HepG2 (cell line): ENCODE measurements at regions of chr3 and their contacts with region 1.

Region 1: GRCh38 chr3:9878700-9879099 is 1.4 kb downstream of the CIDEC start:
- DNase-seq: peak; percentile 84
- ATAC-seq: peak; percentile 98
- H3K4me3 ChIP-seq: peak overlapping the region in 1 of 3 experiments; percentile 51; a peak in 2 of 6 replicates
- H3K27ac ChIP-seq: peak overlapping the region; percentile 49
- H3K4me1 ChIP-seq: peaks cover 34% of the 10 kb centered on the region
- H3K27me3 ChIP-seq: no peaks in the 10 kb centered on the region
- CTCF ChIP-seq: 0 out of 2 replicates have a peak, but pooled peaks have one; percentile 3
- EP300 ChIP-seq: peak in 1 of 2 experiments; percentile 38; a peak in 1 of 4 replicates
- POLR2A ChIP-seq: peak; percentile 62 to 75; a peak in 3 of 4 replicates
- RAD21 ChIP-seq: no peak

Region 2: DNA sequence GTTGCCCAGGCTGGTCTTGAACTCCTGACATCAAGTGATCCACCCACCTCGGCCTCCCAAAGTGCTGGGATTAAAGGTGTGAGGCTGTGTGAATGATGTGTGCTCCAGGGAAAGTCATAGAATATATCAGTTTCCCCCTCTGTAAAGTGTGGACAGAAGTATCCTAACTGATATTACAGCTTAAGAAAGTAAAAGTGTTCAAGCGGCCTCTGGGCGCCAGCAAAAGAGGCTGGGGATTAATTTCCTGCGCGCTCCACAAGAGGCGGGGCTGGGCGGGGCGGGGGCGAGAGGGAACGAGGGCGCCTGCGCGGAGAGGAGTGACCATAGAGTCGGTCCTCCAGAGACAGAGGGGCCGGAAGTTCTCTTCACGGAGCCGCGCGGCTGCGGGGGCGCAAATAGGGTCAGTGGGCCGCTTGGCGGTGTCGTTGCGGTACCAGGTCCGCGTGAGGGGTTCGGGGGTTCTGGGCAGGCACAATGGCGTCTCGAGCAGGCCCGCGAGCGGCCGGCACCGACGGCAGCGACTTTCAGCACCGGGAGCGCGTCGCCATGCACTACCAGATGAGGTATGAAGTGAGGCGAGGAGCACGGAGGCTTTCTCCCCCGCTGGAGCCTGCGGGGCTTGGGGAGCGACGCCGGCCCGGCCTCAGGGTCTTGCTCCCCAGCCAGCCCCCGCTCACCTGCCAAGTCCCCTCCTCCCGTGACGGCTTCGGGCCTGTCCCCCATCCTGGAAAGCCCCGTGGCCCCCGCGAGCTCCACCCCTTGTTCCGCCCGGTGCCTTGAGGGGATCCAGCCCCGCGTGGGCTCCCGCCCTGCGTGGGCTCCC is 11.8 kb after region 1 on chr3 and contains the start of gene JAGN1:
- CTCF ChIA-PET with region 1: no interaction called
- POLR2A ChIA-PET with region 1: interaction called, 14 read pairs
- in situ Hi-C with region 1: no loop called
- intact Hi-C with region 1: loop called (anchors 1 kb)
- DNase-seq: peak; percentile 77
- ATAC-seq: peak; percentile 85
- H3K4me3 ChIP-seq: peak within 1 kb of the TSS; percentile 85 to 99 (median 98)
- H3K27ac ChIP-seq: peak within 1 kb of the TSS; percentile 92
- H3K4me1 ChIP-seq: peaks cover 50% of the 10 kb centered on the region
- H3K27me3 ChIP-seq: no peaks in the 10 kb centered on the region; a peak in 1 of 5 replicates
- CTCF ChIP-seq: peak; percentile 57
- EP300 ChIP-seq: peak in 1 of 2 experiments; percentile 46; a peak in 2 of 4 replicates
- POLR2A ChIP-seq: peak; percentile 89 to 97
- RAD21 ChIP-seq: peak; percentile 71
- total RNA-seq, gene JAGN1: 40.9 and 50.9 TPM in 2 replicates

Region 3: GRCh38 chr3:9915254-9916141 is 36.8 kb after region 1 on chr3:
- CTCF ChIA-PET with region 1: no interaction called
- POLR2A ChIA-PET with region 1: interaction called, 5 read pairs
- in situ Hi-C with region 1: no loop called
- intact Hi-C with region 1: loop called (anchors 5 kb)
- DNase-seq: peak; percentile 36
- ATAC-seq: peak; percentile 52
- H3K4me3 ChIP-seq: peak overlapping the region; percentile 55 to 86 (median 83); a peak in 5 of 6 replicates
- H3K27ac ChIP-seq: peak overlapping the region; percentile 90
- H3K4me1 ChIP-seq: peaks cover 38% of the 10 kb centered on the region
- H3K27me3 ChIP-seq: no peaks in the 10 kb centered on the region
- CTCF ChIP-seq: peak; percentile 53; the same call in 1 of the 2 replicates
- EP300 ChIP-seq: no peak
- POLR2A ChIP-seq: no peak; a peak in 1 of 4 replicates
- RAD21 ChIP-seq: peak; percentile 89

Region 4: GRCh38 chr3:10655105-10655504 is 776.4 kb after region 1 on chr3:
- CTCF ChIA-PET with region 1: no interaction called
- POLR2A ChIA-PET with region 1: no interaction called
- in situ Hi-C with region 1: no loop called
- intact Hi-C with region 1: no loop called
- DNase-seq: no peak
- ATAC-seq: no peak
- H3K4me3 ChIP-seq: no peak overlapping the region
- H3K27ac ChIP-seq: no peak overlapping the region
- H3K4me1 ChIP-seq: no peaks in the 10 kb centered on the region
- H3K27me3 ChIP-seq: peaks cover 0 to 1% of the 10 kb centered on the region in 2 experiments; a peak in 1 of 5 replicates
- CTCF ChIP-seq: no peak
- EP300 ChIP-seq: no peak
- POLR2A ChIP-seq: no peak
- RAD21 ChIP-seq: no peak